ENCODE measurements at regions of chr17 and their contacts with region 1.

Region 1: GRCh38 chr17:49567871-49568694 is 7.6 kb upstream of the NXPH3 start:
- DNase-seq: peak; percentile 64 to 88 (median 77)
- ATAC-seq: peak; percentile 48
- H3K4me3 ChIP-seq: peak overlapping the region; percentile 39
- H3K4me3 Mint-ChIP-seq: peak overlapping the region; percentile 70
- H3K27ac ChIP-seq: no peak overlapping the region
- H3K27ac Mint-ChIP-seq: no peak overlapping the region
- H3K4me1 ChIP-seq: peaks cover 25% of the 10 kb centered on the region
- H3K4me1 Mint-ChIP-seq: peaks cover 14% of the 10 kb centered on the region
- H3K27me3 ChIP-seq: peaks cover 2 to 4% of the 10 kb centered on the region in 2 experiments
- H3K27me3 Mint-ChIP-seq: peaks cover 12% of the 10 kb centered on the region
- CTCF ChIP-seq: peak; percentile 96

Region 2: GRCh38 chr17:49556223-49556971 is 11.7 kb before region 1 on chr17:
- CTCF ChIA-PET with region 1: interaction called, 21 read pairs
- POLR2A ChIA-PET with region 1: no interaction called
- intact Hi-C with region 1: no loop called
- DNase-seq: peak; percentile 63 to 88 (median 77)
- ATAC-seq: peak; percentile 96
- H3K4me3 ChIP-seq: no peak overlapping the region
- H3K4me3 Mint-ChIP-seq: no peak overlapping the region
- H3K27ac ChIP-seq: no peak overlapping the region
- H3K27ac Mint-ChIP-seq: no peak overlapping the region
- H3K4me1 ChIP-seq: peaks cover 12% of the 10 kb centered on the region
- H3K4me1 Mint-ChIP-seq: peaks cover 6% of the 10 kb centered on the region
- H3K27me3 ChIP-seq: no peaks in the 10 kb centered on the region
- H3K27me3 Mint-ChIP-seq: peaks cover 9% of the 10 kb centered on the region
- CTCF ChIP-seq: peak; percentile 97

Region 3: GRCh38 chr17:49677933-49678847 is 110.1 kb after region 1 on chr17 and contains the start of gene SPOP:
- CTCF ChIA-PET with region 1: interaction called, 11 read pairs
- POLR2A ChIA-PET with region 1: interaction called, 3 read pairs
- intact Hi-C with region 1: no loop called
- DNase-seq: peak; percentile 98 to 100 (median 99)
- ATAC-seq: peak; percentile 88
- H3K4me3 ChIP-seq: peak within 1 kb of the TSS; percentile 86
- H3K4me3 Mint-ChIP-seq: peak within 1 kb of the TSS; percentile 98
- H3K27ac ChIP-seq: peak within 1 kb of the TSS; percentile 98 to 99
- H3K27ac Mint-ChIP-seq: peak within 1 kb of the TSS; percentile 95
- H3K4me1 ChIP-seq: peaks cover 29% of the 10 kb centered on the region
- H3K4me1 Mint-ChIP-seq: peaks cover 50% of the 10 kb centered on the region
- H3K27me3 ChIP-seq: no peaks in the 10 kb centered on the region
- H3K27me3 Mint-ChIP-seq: peaks cover 5% of the 10 kb centered on the region
- CTCF ChIP-seq: no peak
- total RNA-seq, gene SPOP: 38.7 to 41.5 TPM

Region 4: DNA sequence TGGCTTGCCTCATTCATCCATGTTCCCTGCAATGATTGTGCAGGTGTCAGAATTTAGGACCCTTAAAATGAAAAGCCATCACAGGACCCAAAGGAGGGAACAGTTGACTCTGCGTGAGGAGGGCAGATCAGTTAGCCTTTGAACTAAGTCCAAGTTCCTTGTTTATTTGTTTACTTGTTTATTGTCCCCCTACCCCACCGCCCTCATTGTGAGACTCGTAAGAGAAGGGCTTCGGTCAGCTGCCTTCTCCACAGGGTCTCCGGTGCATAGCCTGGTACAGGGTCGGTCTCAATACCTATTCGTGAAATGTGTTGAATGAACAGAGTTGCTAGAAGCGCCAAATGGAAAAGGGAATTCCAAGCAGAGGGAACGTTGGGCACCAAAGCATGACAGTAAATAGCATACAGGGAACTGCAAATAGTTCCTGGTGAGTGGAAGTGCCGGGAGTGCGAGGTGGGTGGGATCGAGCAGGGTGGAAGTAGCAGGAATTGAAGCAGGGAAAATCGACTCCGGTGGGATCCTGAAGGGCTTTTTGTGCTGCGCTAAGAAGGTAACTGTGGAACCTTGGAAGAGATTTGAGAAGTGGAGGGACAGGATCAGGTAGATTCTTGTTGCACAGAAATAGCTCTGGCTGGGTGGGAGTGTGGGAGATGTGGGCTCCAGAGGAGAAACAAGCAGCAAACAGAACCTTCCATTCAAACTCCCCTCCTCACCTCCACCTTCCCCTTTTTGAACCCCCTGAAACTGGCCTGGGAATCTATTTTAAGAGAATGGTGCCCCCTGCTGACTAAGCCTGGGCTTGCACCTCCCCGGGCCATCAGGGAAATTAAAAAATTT is 127.0 kb after region 1 on chr17:
- CTCF ChIA-PET with region 1: interaction called, 48 read pairs
- POLR2A ChIA-PET with region 1: interaction called, 14 read pairs
- intact Hi-C with region 1: loop called (anchors 1 kb)
- DNase-seq: peak; percentile 54 to 81 (median 68)
- ATAC-seq: peak; percentile 63
- H3K4me3 ChIP-seq: no peak overlapping the region
- H3K4me3 Mint-ChIP-seq: no peak overlapping the region
- H3K27ac ChIP-seq: no peak overlapping the region
- H3K27ac Mint-ChIP-seq: peak overlapping the region; percentile 91
- H3K4me1 ChIP-seq: peaks cover 32% of the 10 kb centered on the region
- H3K4me1 Mint-ChIP-seq: peaks cover 54% of the 10 kb centered on the region
- H3K27me3 ChIP-seq: no peaks in the 10 kb centered on the region
- H3K27me3 Mint-ChIP-seq: no peaks in the 10 kb centered on the region
- CTCF ChIP-seq: peak; percentile 92

Region 5: GRCh38 chr17:49779739-49780231 is 211.7 kb after region 1 on chr17:
- CTCF ChIA-PET with region 1: interaction called, 7 read pairs
- POLR2A ChIA-PET with region 1: no interaction called
- intact Hi-C with region 1: loop called in 1 of 2 experiments (anchors 2 kb)
- DNase-seq: peak in 7 of 14 experiments; percentile 16 to 68 (median 55)
- ATAC-seq: peak; percentile 44
- H3K4me3 ChIP-seq: no peak overlapping the region
- H3K4me3 Mint-ChIP-seq: no peak overlapping the region
- H3K27ac ChIP-seq: no peak overlapping the region
- H3K27ac Mint-ChIP-seq: no peak overlapping the region
- H3K4me1 ChIP-seq: peaks cover 3% of the 10 kb centered on the region
- H3K4me1 Mint-ChIP-seq: no peaks in the 10 kb centered on the region
- H3K27me3 ChIP-seq: no peaks in the 10 kb centered on the region
- H3K27me3 Mint-ChIP-seq: no peaks in the 10 kb centered on the region
- CTCF ChIP-seq: peak; percentile 66

Region 6: GRCh38 chr17:49815761-49816281 is 247.7 kb after region 1 on chr17:
- CTCF ChIA-PET with region 1: interaction called, 10 read pairs
- POLR2A ChIA-PET with region 1: interaction called, 3 read pairs
- intact Hi-C with region 1: no loop called
- DNase-seq: no peak
- ATAC-seq: no peak
- H3K4me3 ChIP-seq: no peak overlapping the region
- H3K4me3 Mint-ChIP-seq: no peak overlapping the region
- H3K27ac ChIP-seq: peak overlapping the region in 1 of 2 donors; percentile 43
- H3K27ac Mint-ChIP-seq: peak overlapping the region; percentile 96
- H3K4me1 ChIP-seq: peaks cover 51% of the 10 kb centered on the region
- H3K4me1 Mint-ChIP-seq: peaks cover 73% of the 10 kb centered on the region
- H3K27me3 ChIP-seq: no peaks in the 10 kb centered on the region
- H3K27me3 Mint-ChIP-seq: no peaks in the 10 kb centered on the region
- CTCF ChIP-seq: no peak

Region 7: DNA sequence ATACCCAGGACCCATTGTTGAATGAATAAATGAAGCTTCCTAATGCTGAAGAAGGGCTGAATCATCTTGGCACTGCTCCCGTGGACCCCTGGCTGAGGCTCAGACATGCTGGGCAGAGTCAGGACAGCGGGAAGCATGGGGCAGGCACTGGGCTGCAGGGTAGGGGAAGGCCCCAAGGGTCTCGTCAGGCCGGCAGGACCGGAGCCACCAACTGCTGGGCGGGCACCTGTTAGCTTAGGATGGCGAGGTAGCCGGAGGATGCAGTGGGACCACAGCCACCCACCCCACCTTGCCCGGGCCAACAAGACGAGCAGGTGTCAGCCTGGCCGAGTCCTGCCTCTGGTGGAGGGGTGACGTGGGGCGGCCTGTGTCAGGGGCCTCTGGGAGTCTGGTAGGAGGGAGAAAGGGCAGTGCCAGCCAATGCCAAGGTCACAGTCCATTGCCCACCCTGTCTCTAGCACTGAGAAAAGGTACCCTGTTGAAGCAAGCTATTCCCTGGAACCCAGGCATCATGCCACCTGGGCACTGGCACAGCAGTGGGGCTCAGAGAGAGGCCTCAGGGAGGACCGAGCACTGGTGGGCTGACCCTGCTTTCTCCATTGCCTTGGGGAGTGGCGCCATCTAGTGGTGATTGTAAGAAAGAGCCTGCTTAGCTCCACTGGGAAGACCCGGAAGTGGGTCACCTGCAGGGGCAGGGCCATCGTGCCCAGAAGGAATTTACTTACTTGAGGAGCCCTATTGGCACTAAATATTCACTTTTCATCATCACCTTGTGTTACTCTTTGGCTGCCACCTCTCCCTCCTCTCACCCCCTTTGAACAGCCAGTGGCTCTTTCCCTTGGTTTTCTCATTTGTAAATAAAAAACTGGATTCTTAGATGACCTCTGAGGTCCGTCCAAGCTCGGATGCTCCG is 430.0 kb after region 1 on chr17:
- CTCF ChIA-PET with region 1: interaction called, 18 read pairs
- POLR2A ChIA-PET with region 1: interaction called, 3 read pairs
- intact Hi-C with region 1: loop called (anchors 1 kb)
- DNase-seq: peak; percentile 68 to 94 (median 78)
- ATAC-seq: peak; percentile 83
- H3K4me3 ChIP-seq: no peak overlapping the region
- H3K4me3 Mint-ChIP-seq: no peak overlapping the region
- H3K27ac ChIP-seq: no peak overlapping the region
- H3K27ac Mint-ChIP-seq: no peak overlapping the region
- H3K4me1 ChIP-seq: peaks cover 44% of the 10 kb centered on the region
- H3K4me1 Mint-ChIP-seq: peaks cover 39% of the 10 kb centered on the region
- H3K27me3 ChIP-seq: peaks cover 71 to 82% of the 10 kb centered on the region in 2 experiments
- H3K27me3 Mint-ChIP-seq: peaks cover 84% of the 10 kb centered on the region
- CTCF ChIP-seq: peak; percentile 94

Measured in CD4-positive, alpha-beta T cell (primary cell).